Activated naive CD4-positive, alpha-beta T cell treated with anti-CD3 and anti-CD28 coated beads, Interleukin-2, amount 10 ng/mL, durations not matched to agents 7 days and 5 days (primary cell): ENCODE measurements at regions of chr19 and their contacts with region 1.

Region 1: GRCh38 chr19:11203194-11204075 is 6.1 kb upstream of the KANK2 start:
- DNase-seq: peak; percentile 46
- H3K4me3 Mint-ChIP-seq: no peak overlapping the region
- H3K27ac Mint-ChIP-seq: peak overlapping the region; percentile 59
- H3K4me1 Mint-ChIP-seq: no peaks in the 10 kb centered on the region
- H3K27me3 Mint-ChIP-seq: peaks cover 49% of the 10 kb centered on the region

Region 2: DNA sequence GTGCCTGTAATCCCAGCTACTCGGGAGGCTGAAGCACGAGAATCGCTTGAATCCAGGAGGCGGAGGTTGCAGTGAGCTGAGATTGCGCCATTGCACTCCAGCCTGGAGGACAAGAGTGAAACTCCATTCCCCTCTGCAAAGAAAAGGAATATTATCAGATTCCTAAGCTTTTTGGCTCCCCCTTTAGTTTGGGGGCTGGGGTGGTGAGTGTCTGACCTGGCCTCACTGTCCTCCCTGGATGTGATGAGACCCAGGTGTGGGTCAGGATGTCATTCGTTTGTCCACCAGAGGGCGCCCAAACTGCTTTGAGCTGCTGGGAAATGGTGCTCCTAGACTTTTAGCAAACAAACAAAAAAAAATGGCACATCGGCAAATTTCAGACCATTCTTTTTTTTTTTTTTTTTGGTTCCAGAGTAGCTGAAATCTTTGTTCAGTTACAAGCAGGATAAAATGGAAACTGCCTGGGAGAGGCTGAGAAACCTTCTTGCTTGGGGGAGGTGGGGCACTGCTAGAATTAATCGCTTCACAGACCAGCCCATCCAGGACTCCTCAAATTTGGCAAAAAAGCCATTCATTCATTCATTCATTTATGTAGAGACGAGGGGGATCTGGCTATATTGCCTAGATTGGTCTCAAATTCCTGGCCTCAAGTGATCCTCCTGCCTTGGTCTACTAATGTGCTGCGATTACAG is 77.3 kb before region 1 on chr19:
- CTCF ChIA-PET with region 1: interaction called, 14 read pairs
- DNase-seq: peak; percentile 86
- H3K4me3 Mint-ChIP-seq: no peak overlapping the region
- H3K27ac Mint-ChIP-seq: no peak overlapping the region
- H3K4me1 Mint-ChIP-seq: peaks cover 2% of the 10 kb centered on the region
- H3K27me3 Mint-ChIP-seq: no peaks in the 10 kb centered on the region